ENCODE measurements at regions of chr1 and their contacts with region 1.

Region 1: DNA sequence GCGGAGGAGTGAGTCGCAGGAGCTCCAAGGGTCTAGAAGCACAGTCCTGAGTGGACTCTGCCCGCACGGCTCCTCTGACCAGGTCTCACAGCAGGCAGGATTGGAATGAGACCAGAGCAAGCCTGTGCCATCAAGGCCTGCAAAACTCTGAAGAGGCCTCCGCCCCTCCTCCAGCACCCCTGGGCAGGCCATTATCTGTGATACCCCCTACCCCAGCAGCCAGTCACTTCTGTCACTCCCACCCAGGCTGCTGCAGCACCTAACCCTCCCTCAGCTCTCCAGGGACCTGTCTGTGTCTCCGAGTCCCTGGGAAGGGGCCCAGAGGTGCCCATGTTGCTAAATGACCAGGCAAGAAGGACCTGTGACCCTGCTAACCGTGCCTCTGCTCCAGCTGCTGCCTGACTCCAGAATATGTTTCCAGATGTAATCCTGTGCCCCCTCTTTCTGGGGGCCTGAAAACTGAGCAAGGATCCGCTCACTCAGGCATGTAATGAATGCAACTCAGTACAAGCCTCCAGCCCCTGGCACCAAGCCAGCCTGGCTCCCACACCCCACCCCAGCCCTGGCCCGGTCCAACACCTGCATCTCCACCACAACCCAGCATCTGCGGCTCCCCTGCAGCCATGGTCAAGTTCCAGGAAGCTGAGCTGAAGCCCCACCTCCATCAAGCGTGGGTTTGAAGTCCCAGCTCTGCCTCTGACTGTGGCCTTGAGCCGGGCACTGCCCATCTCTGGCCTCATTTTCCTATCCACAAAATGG is 22.1 kb upstream of the COL16A1 start:
- DNase-seq: no peak
- H3K4me3 ChIP-seq: no peak overlapping the region
- H3K27ac ChIP-seq: no peak overlapping the region
- H3K4me1 ChIP-seq: no peaks in the 10 kb centered on the region
- H3K27me3 ChIP-seq: peaks cover 13% of the 10 kb centered on the region
- CTCF ChIP-seq: no peak

Region 2: GRCh38 chr1:31394628-31395193 is 331.2 kb before region 1 on chr1:
- CTCF ChIA-PET with region 1: no interaction called
- POLR2A ChIA-PET with region 1: no interaction called
- intact Hi-C with region 1: no loop called
- DNase-seq: peak; percentile 76 to 88
- H3K4me3 ChIP-seq: peak overlapping the region; percentile 33; the same call in 1 of the 2 replicates
- H3K27ac ChIP-seq: no peak overlapping the region
- H3K4me1 ChIP-seq: peaks cover 30% of the 10 kb centered on the region
- H3K27me3 ChIP-seq: no peaks in the 10 kb centered on the region
- CTCF ChIP-seq: peak; percentile 78

Region 3: GRCh38 chr1:32020339-32020738 is 294.4 kb after region 1 on chr1:
- CTCF ChIA-PET with region 1: no interaction called
- POLR2A ChIA-PET with region 1: interaction called, 11 read pairs
- intact Hi-C with region 1: no loop called
- DNase-seq: no peak
- H3K4me3 ChIP-seq: no peak overlapping the region
- H3K27ac ChIP-seq: no peak overlapping the region
- H3K4me1 ChIP-seq: peaks cover 26% of the 10 kb centered on the region
- H3K27me3 ChIP-seq: no peaks in the 10 kb centered on the region
- CTCF ChIP-seq: no peak

Region 4: DNA sequence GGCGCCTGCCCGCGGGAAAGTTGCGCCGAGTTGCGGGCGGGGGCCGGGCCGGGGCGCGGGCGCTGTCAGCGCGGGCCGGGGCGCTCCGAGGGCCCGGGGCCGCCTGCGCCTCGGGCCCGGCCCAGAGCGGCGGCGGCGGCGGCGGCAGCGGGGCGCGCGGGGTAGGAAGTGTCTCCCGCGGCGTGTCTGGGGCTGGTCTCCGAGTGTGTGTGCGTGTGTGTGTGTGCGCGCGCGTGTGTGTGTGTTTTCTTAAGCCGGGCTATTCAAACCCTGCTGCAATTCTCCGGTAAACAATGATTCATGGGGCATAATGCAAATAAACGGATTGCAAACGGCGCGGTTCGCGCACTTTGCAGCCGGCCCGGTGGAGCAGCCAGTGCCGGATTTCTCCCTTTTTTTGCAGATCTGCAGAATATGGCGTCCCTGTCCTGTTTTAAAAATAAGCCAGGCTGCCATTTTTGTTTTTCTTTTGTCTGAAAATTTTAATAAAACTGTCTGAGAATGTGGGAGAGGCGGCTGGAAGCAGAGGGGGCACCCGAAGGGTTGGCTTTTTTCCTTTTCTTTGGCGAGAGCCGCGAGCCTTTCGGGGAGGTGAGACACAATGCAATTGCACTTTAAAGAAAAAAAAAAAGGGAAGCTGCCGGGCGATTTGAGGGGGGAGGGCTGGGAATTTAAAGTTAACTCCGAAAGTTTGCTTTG is 1530.9 kb after region 1 on chr1:
- CTCF ChIA-PET with region 1: no interaction called
- POLR2A ChIA-PET with region 1: interaction called, 10 read pairs
- intact Hi-C with region 1: no loop called
- DNase-seq: peak; percentile 41 to 77
- H3K4me3 ChIP-seq: peak overlapping the region; percentile 67
- H3K27ac ChIP-seq: peak overlapping the region; percentile 62
- H3K4me1 ChIP-seq: peaks cover 22% of the 10 kb centered on the region
- H3K27me3 ChIP-seq: no peaks in the 10 kb centered on the region
- CTCF ChIP-seq: no peak

Measured in PC-9 (cell line).